Activated CD4-positive, alpha-beta memory T cell treated with anti-CD3 and anti-CD28 coated beads, Interleukin-2, amount 10 ng/mL, durations not matched to agents 7 days and 5 days (primary cell): ENCODE measurements at regions of chr15 and their contacts with region 1.

Region 1: DNA sequence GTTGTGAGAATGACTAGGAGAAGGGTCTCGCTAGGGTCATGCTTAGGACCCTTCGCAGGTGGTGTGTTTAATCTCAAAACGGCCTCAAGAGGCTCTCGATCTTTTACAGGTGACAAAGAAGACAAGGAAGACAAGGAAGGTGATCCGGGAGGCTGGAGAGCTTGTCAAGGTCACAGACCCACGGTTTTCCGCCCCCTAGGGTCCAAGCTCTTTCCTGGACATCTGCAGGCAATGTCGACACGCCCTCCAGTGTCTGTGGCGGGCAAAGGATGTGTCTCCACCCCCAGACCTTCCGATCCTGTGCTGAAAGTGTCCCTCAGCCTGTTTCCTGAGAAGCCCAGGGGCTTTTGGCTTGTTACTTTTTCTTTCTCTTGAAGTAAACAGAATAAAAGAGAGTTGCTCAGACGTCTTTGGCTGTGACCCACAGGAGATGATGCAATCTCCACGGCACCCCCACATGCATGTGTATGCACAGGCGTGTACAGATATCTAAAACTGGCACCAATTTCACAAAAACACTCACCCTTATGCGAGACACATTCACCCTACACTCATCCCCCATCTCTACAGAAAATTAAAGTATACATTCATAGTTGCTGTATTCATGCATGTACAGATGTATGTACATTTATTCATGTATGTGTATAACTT is 108.8 kb downstream of the KLF13 start:
- DNase-seq: peak; percentile 88
- H3K4me3 Mint-ChIP-seq: peak overlapping the region; percentile 75
- H3K27ac Mint-ChIP-seq: peak overlapping the region; percentile 100
- H3K4me1 Mint-ChIP-seq: peaks cover 77% of the 10 kb centered on the region
- H3K27me3 Mint-ChIP-seq: no peaks in the 10 kb centered on the region

Region 2: GRCh38 chr15:31326156-31326732 is 109.1 kb before region 1 on chr15:
- CTCF ChIA-PET with region 1: interaction called, 9 read pairs
- POLR2A ChIA-PET with region 1: interaction called, 46 read pairs
- DNase-seq: peak; percentile 100
- H3K4me3 Mint-ChIP-seq: peak overlapping the region; percentile 88
- H3K27ac Mint-ChIP-seq: peak overlapping the region; percentile 86
- H3K4me1 Mint-ChIP-seq: peaks cover 43% of the 10 kb centered on the region
- H3K27me3 Mint-ChIP-seq: no peaks in the 10 kb centered on the region

Region 3: DNA sequence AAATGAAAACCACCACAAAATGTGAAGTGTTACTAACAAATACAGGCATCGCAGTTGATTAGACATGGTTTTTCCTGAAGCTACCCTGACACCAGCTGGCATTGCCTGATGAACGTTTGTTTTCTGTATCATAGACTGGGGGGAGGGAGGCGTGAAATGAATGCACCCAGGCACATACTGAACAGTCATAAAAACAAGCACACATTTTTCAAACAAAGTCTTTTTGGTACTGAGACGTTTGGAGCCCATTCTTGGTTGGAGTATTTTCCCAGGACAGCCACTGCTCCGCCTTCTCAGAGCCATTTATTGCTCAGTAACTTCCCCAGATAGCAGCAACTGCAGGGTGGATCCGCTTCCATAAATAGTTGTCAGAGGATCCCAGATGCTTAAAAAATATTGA is 56.3 kb before region 1 on chr15:
- CTCF ChIA-PET with region 1: interaction called, 3 read pairs
- POLR2A ChIA-PET with region 1: interaction called, 20 read pairs
- DNase-seq: no peak
- H3K4me3 Mint-ChIP-seq: no peak overlapping the region
- H3K27ac Mint-ChIP-seq: no peak overlapping the region
- H3K4me1 Mint-ChIP-seq: peaks cover 16% of the 10 kb centered on the region
- H3K27me3 Mint-ChIP-seq: no peaks in the 10 kb centered on the region

Region 4: GRCh38 chr15:31405200-31405920 is 30.0 kb before region 1 on chr15:
- CTCF ChIA-PET with region 1: interaction called, 16 read pairs
- POLR2A ChIA-PET with region 1: interaction called, 19 read pairs
- DNase-seq: no peak
- H3K4me3 Mint-ChIP-seq: no peak overlapping the region
- H3K27ac Mint-ChIP-seq: peak overlapping the region; percentile 62
- H3K4me1 Mint-ChIP-seq: peaks cover 23% of the 10 kb centered on the region
- H3K27me3 Mint-ChIP-seq: peaks cover 8% of the 10 kb centered on the region

Region 5: DNA sequence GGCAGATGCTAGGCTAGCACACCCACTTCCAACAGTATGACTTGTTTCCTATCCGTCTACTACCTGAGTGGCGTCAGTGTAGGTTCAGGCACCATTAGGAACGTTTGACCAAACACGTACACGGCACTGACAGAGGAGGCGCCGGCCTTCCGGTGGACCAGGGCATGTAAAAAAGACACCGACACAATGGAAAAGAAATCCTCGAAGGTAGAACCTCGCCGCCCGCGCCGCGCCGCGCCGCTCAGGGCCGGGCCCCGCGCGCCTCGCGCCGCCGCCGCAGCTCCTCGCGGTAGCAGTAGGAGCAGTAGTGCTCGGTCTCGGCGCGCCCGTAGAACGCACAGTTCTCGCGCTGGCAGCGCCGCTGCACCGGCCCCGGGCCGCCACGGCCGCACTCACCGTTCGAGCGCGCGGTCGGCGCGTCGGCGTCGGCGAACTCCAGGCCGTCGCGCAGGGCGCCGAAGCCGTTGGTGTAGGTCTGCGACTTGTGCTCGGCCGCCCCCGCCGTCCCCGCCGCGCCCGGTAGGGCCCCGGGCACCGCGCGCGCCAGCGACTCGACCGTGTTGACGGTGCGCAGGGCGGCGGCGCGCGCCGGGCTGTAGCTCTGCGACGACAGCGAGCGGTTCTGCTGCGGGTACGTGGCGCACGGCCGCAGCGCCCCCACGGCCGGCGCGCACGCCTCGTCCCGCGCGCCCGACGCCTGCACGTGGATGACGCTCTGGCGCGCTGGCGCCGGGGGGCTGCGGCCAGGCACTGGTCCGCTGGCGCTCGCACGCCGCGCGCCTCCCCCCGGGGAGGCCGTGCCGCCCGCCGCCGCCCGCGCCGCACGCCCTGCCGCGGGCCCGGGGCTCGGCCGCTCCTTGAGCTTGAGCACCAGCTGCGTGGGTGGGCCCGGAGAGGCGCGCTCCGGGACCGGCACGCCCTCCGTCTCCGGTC is 47.9 kb after region 1 on chr15:
- CTCF ChIA-PET with region 1: interaction called, 117 read pairs
- POLR2A ChIA-PET with region 1: interaction called, 48 read pairs
- DNase-seq: peak; percentile 64
- H3K4me3 Mint-ChIP-seq: peak overlapping the region; percentile 86
- H3K27ac Mint-ChIP-seq: peak overlapping the region; percentile 86
- H3K4me1 Mint-ChIP-seq: peaks cover 63% of the 10 kb centered on the region
- H3K27me3 Mint-ChIP-seq: peaks cover 7% of the 10 kb centered on the region